ENCODE measurements at regions of chr6 and their contacts with region 1.

Region 1: GRCh38 chr6:47631269-47631772 is 67.1 kb upstream of the ADGRF4 start:
- DNase-seq: no peak
- H3K4me3 Mint-ChIP-seq: no peak overlapping the region
- H3K27ac Mint-ChIP-seq: no peak overlapping the region
- H3K4me1 Mint-ChIP-seq: peaks cover 8% of the 10 kb centered on the region
- H3K27me3 Mint-ChIP-seq: no peaks in the 10 kb centered on the region

Region 2: DNA sequence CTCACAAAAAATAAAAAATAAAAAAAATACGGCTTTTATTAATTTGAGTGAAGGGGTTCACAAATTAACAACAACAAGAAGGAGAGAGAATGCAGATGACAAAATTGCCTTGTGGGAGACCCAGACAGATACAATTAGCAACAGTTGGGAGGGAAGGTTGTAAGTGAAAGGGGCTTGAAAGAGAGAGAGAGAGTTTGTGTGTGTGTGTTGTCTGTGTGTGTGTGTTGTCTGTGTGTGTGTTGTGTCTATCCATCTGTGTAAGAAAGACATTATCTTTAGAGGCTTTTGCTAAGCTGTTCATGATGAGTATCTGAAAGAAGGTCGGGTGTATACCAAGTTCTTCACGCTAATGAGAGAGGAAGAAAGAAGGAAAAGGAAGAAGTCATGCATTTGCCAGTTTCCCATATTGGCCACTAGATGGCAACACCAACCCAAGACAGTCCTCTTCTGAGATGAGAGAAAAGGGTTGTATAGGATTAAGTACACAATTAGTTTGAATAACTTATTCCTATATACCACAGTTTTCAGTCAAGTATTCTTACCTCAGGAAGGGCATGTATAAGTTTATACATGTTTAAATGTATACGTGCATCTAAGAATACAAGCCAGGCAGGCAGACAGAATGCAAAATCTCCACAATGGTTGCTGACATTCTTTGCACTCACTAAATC is 217.4 kb before region 1 on chr6:
- CTCF ChIA-PET with region 1: interaction called, 13 read pairs
- POLR2A ChIA-PET with region 1: no interaction called
- DNase-seq: peak; percentile 34
- H3K4me3 Mint-ChIP-seq: peak overlapping the region; percentile 73
- H3K27ac Mint-ChIP-seq: peak overlapping the region; percentile 75
- H3K4me1 Mint-ChIP-seq: peaks cover 20% of the 10 kb centered on the region
- H3K27me3 Mint-ChIP-seq: peaks cover 20% of the 10 kb centered on the region

Region 3: DNA sequence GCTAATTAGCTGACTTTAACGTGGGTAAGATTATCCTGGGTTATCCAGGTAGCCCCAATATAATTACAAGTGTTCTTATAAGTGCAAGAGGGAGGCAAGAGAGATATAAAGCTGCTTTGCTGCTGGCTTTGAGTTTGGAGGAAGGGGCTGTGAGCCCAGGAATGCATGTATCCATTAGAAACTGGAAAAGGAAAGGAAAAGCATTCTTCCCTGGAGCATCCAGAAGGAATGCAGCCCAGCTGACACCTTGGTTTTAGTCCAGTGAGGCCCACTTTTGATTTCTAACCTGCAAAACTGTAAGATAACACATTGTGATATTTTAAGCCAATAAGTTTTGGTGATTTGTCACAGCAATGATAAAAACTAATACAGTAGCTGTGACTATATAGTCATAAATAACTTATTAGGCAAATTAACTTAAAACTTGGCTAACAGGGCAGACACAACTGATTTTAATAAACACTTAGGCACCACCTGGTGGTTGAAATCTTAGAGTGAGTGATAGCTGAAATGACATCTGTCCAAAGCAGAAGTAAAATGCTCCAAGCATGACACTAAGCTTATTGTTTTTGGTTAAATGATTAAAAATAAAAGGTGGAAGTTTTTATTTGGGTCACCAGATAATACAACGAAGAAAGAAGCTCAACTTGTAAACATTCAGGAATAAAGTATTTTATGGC is 102.7 kb after region 1 on chr6:
- CTCF ChIA-PET with region 1: interaction called, 32 read pairs
- POLR2A ChIA-PET with region 1: interaction called, 7 read pairs
- DNase-seq: no peak
- H3K4me3 Mint-ChIP-seq: no peak overlapping the region
- H3K27ac Mint-ChIP-seq: no peak overlapping the region
- H3K4me1 Mint-ChIP-seq: no peaks in the 10 kb centered on the region
- H3K27me3 Mint-ChIP-seq: peaks cover 8% of the 10 kb centered on the region

Region 4: GRCh38 chr6:47780510-47781356 is 149.4 kb after region 1 on chr6:
- CTCF ChIA-PET with region 1: interaction called, 45 read pairs
- POLR2A ChIA-PET with region 1: no interaction called
- DNase-seq: peak; percentile 34
- H3K4me3 Mint-ChIP-seq: no peak overlapping the region
- H3K27ac Mint-ChIP-seq: no peak overlapping the region
- H3K4me1 Mint-ChIP-seq: peaks cover 3% of the 10 kb centered on the region
- H3K27me3 Mint-ChIP-seq: peaks cover 25% of the 10 kb centered on the region

Region 5: DNA sequence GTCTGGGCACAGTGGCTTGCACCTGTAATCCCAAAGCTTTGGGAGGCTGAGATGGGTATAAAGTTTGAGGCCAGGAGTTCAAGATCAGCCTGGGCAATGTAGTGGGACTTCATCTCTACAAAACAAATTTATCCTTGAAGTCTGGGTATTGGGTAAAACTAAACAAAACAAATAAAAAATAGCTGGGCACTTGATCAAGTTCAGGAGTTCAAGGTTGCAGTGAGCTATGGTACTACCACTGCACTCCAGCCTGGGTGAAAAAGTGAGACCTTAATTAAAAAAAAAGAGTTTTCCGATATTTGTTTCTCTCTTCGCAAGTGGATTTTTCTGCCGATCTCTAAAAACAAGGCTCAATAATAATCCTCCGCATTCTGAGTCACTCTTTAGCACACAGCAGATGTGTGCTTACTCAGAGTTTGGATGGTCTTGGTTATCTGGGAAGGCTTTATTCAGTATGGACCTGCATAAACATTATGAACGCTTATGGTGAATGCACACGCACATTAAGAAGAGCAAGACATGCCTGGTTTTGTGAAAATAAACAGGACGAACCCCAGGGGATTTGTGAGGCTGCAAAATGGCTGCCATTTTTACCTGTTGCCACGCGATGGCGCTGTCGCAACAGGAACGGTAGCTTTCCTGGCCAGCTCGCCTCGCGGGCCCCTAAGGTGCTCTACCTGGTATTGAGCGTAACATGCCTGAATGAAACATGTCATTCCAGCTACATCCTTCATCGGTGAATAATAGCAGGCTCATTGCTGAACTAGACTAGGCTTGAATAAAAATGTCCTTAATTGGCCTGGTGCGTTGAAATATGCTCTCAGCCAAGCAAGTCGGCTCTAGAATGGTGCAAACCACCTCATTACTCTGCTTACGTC is 156.5 kb after region 1 on chr6:
- CTCF ChIA-PET with region 1: interaction called, 14 read pairs
- POLR2A ChIA-PET with region 1: no interaction called
- DNase-seq: peak; percentile 58
- H3K4me3 Mint-ChIP-seq: no peak overlapping the region
- H3K27ac Mint-ChIP-seq: no peak overlapping the region
- H3K4me1 Mint-ChIP-seq: no peaks in the 10 kb centered on the region
- H3K27me3 Mint-ChIP-seq: peaks cover 43% of the 10 kb centered on the region

Measured in activated CD4-positive, alpha-beta memory T cell treated with anti-CD3 and anti-CD28 coated beads, Interleukin-2, amount 10 ng/mL, durations not matched to agents 7 days and 5 days (primary cell).